Stomach (tissue), 19 donors: ENCODE measurements at regions of chr10 and their contacts with region 1.

Region 1: DNA sequence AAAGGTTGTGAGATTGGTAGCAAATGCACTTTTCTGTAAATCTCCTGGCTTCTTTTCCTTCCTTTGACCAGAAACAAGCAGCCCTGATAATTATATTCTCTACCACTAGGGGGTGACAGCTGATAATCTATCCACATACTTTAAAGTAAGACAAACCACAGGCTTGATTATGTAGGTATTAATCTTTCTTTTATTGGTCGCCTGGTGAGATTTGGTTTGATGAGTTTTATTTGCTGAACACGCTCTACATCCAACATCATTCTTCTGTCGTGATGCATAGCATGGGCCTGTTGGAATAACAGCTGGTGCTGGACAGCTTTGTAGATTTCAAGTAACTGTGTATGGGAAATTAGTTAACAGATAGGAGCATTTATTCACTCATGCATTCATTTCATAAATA is 63.5 kb downstream of the ZNF365 start:
- DNase-seq: peak in 1 of 2 donors; percentile 82
- H3K4me3 ChIP-seq: no peak overlapping the region
- H3K27ac ChIP-seq: no peak overlapping the region
- H3K4me1 ChIP-seq: peaks cover 0 to 6% (median 0%) of the 10 kb centered on the region in 4 donors
- H3K27me3 ChIP-seq: peaks cover 0 to 5% (median 0%) of the 10 kb centered on the region in 3 donors
- CTCF ChIP-seq: peak in 5 of 7 experiments; percentile 62 to 89 (median 68)
- EP300 ChIP-seq: no peak
- POLR2A ChIP-seq: no peak

Region 2: GRCh38 chr10:63157845-63158624 is 720.3 kb after region 1 on chr10:
- intact Hi-C with region 1: loop called (anchors 5 kb)
- DNase-seq: peak in 1 of 2 donors; percentile 92
- H3K4me3 ChIP-seq: no peak overlapping the region
- H3K27ac ChIP-seq: no peak overlapping the region
- H3K4me1 ChIP-seq: peaks cover 0 to 29% (median 0%) of the 10 kb centered on the region in 4 donors
- H3K27me3 ChIP-seq: no peaks in the 10 kb centered on the region
- CTCF ChIP-seq: peak in 5 of 7 experiments; percentile 44 to 77 (median 69)
- EP300 ChIP-seq: no peak
- POLR2A ChIP-seq: no peak